ENCODE measurements at regions of chr22 and their contacts with region 1.

Region 1: GRCh38 chr22:39170825-39171622 is 18.5 kb upstream of the CBX7 start:
- DNase-seq: peak; percentile 85
- H3K4me3 ChIP-seq: peak overlapping the region; percentile 26
- H3K27ac ChIP-seq: peak overlapping the region; percentile 88
- H3K4me1 ChIP-seq: peaks cover 55% of the 10 kb centered on the region
- H3K27me3 ChIP-seq: no peaks in the 10 kb centered on the region
- CTCF ChIP-seq: peak; percentile 96

Region 2: DNA sequence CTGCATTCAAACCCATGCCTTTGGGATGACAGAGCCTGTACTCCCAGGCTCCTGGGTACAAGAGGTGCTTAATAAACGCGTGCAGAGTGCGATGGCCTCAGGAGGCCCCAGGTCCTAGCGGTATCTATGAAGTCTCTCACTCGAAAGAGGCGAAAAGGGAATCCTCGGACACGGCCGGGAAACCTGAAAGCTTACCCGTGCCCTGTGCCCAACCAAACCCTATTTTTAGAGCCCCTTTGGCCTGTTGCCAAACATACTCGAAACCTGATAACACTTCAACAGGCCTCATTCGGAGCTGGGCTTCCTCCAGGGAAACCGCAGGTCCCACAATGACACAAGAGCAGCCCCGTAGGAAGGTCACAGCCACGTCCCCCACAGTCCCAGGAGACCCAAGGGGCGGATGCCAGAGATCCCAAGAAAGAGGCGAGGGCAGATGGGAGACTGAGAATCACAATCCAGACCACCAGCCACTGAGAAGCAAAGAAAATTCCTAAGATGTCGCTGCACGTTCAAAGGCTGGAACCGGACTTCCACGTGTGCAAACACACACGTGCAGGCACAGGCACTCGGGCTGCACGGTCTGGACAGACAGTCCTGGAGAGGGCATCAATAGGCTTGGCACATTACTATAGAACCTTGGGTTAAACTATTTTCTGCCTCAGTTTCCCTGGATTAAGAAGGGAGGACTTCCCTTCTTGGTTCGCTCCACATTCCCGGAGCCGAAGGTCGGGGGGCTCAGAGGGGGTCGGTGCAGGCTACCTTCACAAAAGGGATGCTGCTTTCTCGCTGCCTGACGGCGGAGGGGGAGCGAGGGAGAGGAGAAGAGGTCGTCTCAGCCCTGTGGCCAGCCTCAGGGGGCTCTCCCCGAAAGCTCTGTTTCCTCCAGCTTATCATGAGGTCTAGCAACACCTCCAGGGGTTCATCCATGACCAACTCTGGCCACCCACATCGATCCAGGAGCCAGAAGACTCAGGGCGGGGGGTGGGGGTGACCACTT is 65.6 kb after region 1 on chr22:
- intact Hi-C with region 1: loop called (anchors 10 kb)
- DNase-seq: peak; percentile 69
- H3K4me3 ChIP-seq: peak overlapping the region; percentile 82
- H3K27ac ChIP-seq: peak overlapping the region; percentile 97
- H3K4me1 ChIP-seq: peaks cover 100% of the 10 kb centered on the region
- H3K27me3 ChIP-seq: no peaks in the 10 kb centered on the region
- CTCF ChIP-seq: no peak

Region 3: GRCh38 chr22:39248254-39248653 is 77.2 kb after region 1 on chr22:
- intact Hi-C with region 1: no loop called
- DNase-seq: no peak
- H3K4me3 ChIP-seq: no peak overlapping the region
- H3K27ac ChIP-seq: no peak overlapping the region
- H3K4me1 ChIP-seq: peaks cover 78% of the 10 kb centered on the region
- H3K27me3 ChIP-seq: peaks cover 13% of the 10 kb centered on the region
- CTCF ChIP-seq: no peak

Region 4: DNA sequence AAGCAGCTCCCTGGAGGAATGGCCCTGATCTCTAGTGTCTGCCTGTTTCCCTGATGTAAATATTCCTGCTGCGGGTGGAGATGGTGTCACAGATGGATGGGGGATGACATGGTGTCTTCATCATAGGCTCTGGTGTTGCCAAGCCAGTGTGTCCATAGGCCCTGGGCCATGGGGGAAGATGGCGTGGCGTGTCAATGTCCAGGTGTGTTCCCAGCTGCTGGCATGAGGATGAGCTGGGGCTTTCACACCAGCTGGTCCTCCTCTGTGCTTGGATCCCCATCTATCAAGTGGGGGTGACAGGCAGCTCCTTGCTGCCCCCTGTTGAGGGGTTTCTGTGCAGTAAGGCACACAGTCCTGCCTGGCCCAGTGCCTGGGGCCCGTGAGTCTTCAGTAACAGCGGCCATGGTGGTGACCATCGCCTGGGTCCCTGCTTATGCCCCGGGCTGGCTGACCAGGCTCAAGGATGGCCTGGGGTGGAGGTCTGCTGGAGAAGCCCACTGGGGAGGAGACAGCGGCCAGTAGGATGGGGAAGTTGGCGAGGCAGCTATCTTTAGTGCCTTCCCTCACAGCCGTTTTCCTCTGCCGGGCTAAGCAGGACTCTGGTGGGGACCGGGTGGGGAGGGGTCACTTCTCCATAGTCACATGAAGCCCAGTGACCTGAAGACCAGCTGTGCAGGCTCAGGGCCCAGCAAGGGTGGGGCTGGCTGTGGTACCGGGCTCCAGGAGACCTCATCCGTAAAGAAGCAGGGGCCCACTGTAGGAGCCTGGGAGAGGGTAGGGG is 135.7 kb after region 1 on chr22:
- intact Hi-C with region 1: loop called (anchors 5 kb)
- DNase-seq: no peak
- H3K4me3 ChIP-seq: no peak overlapping the region
- H3K27ac ChIP-seq: no peak overlapping the region
- H3K4me1 ChIP-seq: peaks cover 53% of the 10 kb centered on the region
- H3K27me3 ChIP-seq: no peaks in the 10 kb centered on the region
- CTCF ChIP-seq: peak; percentile 58